Mammary epithelial cell (primary cell): ENCODE measurements at regions of chr3 and their contacts with region 1.

Region 1: GRCh38 chr3:185498503-185499396 is at the start of gene TMEM41A:
- DNase-seq: peak; percentile 88
- H3K4me3 ChIP-seq: peak within 1 kb of the TSS; percentile 73 to 98 (median 96)
- H3K27ac ChIP-seq: peak within 1 kb of the TSS; percentile 78
- H3K4me1 ChIP-seq: peaks cover 10% of the 10 kb centered on the region
- H3K27me3 ChIP-seq: no peaks in the 10 kb centered on the region
- CTCF ChIP-seq: no peak
- total RNA-seq, gene TMEM41A: 17.7 to 18.6 TPM

Region 2: DNA sequence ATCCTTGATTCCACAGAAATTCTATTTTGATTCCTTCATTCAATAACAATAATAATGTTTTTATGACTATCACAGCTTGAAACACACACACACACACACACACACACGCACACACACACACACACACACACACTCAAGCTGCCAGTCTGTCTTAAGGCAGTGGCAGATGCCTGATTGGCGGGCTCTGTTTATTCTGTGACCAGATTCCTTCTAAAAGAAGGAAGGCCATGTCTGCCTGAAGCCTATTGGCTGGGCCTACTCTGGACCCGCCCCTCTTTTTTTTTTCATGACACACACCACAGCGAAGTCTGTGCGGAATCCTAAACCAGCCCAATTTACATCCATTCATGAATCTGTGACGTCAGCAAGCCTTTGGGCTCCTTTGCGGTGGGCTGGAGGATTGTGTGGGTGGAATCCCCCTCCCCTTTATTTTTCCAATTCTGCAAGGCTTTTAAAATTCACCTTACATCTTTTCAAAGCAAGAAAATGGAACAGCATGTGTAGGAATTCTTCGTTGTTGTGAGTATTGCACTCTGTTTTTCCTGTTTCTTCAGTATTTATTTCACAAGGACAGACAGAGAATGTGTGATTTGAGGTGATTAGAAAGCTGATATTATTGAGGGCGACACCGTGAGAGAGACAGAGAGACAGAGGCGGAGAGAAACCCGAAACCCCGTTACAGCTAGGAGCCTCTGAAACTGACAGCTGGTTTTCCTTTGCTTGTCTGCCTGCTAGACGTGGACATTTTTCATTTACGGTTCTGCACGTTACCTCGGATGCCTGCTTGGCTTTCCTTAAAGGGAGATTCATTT is 135.7 kb before region 1 on chr3 and contains the start of gene MAP3K13:
- CTCF ChIA-PET with region 1: no interaction called
- dilution Hi-C with region 1: no loop called
- in situ Hi-C with region 1: no loop called
- intact Hi-C with region 1: loop called (anchors 5 kb)
- DNase-seq: peak; percentile 94
- H3K4me3 ChIP-seq: peak within 1 kb of the TSS; percentile 60 to 63 (median 61)
- H3K27ac ChIP-seq: peak within 1 kb of the TSS; percentile 79
- H3K4me1 ChIP-seq: peaks cover 18% of the 10 kb centered on the region
- H3K27me3 ChIP-seq: no peaks in the 10 kb centered on the region
- CTCF ChIP-seq: no peak
- total RNA-seq, gene MAP3K13: 21.5 to 28.8 TPM

Region 3: DNA sequence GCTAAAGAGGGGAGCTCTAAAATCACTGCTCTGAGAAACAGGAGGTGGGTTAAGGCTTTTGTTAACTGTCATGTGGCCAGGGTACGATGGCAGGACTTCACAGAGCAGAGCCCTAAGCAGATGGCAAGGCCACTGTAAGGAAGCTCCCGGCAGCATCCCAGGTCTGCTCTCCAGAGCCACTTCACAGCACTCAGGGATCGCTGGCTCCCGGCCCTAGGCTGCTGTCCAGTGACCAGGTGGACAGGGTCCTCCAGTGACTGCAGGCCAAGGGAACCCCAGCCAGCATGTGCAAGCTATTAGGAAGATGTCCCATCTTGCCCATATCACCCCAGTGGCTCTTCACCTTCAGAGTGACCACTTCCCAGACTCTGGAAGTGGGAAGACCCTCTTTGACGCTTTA is 10.3 kb before region 1 on chr3:
- CTCF ChIA-PET with region 1: no interaction called
- dilution Hi-C with region 1: no loop called
- in situ Hi-C with region 1: no loop called
- intact Hi-C with region 1: no loop called
- DNase-seq: no peak
- H3K4me3 ChIP-seq: no peak overlapping the region
- H3K27ac ChIP-seq: no peak overlapping the region
- H3K4me1 ChIP-seq: peaks cover 13% of the 10 kb centered on the region
- H3K27me3 ChIP-seq: no peaks in the 10 kb centered on the region
- CTCF ChIP-seq: no peak

Region 4: GRCh38 chr3:185552358-185552877 is 53.7 kb after region 1 on chr3 and contains the start of gene LIPH:
- CTCF ChIA-PET with region 1: no interaction called
- dilution Hi-C with region 1: no loop called
- in situ Hi-C with region 1: no loop called
- intact Hi-C with region 1: loop called (anchors 2 kb)
- DNase-seq: peak; percentile 66
- H3K4me3 ChIP-seq: no peak within 1 kb of the TSS
- H3K27ac ChIP-seq: no peak within 1 kb of the TSS
- H3K4me1 ChIP-seq: peaks cover 13% of the 10 kb centered on the region
- H3K27me3 ChIP-seq: no peaks in the 10 kb centered on the region
- CTCF ChIP-seq: no peak
- total RNA-seq, gene LIPH: 0.38 to 0.50 TPM

Region 5: GRCh38 chr3:185558395-185558794 is 59.6 kb after region 1 on chr3:
- CTCF ChIA-PET with region 1: interaction called, 3 read pairs
- dilution Hi-C with region 1: no loop called
- in situ Hi-C with region 1: no loop called
- intact Hi-C with region 1: loop called (anchors 1 kb)
- DNase-seq: peak; percentile 68
- H3K4me3 ChIP-seq: no peak overlapping the region
- H3K27ac ChIP-seq: peak overlapping the region; percentile 38
- H3K4me1 ChIP-seq: peaks cover 9% of the 10 kb centered on the region
- H3K27me3 ChIP-seq: no peaks in the 10 kb centered on the region
- CTCF ChIP-seq: no peak

Region 6: DNA sequence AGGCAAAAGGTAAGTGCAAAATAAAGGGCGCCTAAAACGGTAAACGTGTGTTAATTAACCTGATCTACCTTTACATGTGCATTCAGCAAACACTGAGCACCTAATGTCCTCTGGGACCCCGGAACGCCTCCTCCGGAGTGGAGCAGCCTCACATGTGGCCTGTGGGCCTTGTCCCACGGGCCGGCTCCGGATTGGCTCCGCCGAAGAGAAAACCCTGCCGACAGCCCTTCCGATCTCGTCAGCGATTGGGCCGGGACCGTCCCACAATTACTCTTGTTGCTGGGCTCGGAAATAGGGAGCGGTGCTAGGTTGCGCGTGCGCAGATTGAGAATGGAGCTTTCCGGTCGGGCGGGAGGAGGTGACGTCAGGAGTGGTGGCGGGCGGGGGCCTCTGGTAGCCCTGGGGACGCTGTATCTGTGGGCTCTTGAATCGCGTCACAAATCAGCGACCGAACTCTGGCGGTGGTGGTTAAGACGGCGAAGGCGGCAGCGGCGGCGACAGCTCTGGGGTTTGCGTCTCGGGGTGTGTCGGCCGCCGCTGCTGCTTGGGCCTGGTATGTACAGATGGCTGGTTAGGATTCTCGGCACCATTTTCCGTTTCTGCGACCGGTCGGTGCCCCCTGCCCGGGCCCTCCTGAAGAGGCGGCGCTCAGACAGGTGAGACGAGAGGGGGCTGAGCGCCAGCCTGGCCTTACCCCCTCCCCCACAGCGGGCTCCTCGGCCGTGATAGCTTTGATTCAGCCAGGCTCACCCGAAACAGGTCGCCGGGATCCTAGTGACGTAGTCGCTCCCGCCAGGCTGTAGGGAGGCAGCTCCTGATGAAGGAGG is 87.3 kb after region 1 on chr3 and contains the start of gene SENP2:
- CTCF ChIA-PET with region 1: no interaction called
- dilution Hi-C with region 1: no loop called
- in situ Hi-C with region 1: no loop called
- intact Hi-C with region 1: loop called (anchors 5 kb)
- DNase-seq: peak; percentile 99
- H3K4me3 ChIP-seq: peak within 1 kb of the TSS; percentile 60 to 93 (median 82)
- H3K27ac ChIP-seq: peak within 1 kb of the TSS; percentile 83
- H3K4me1 ChIP-seq: peaks cover 11% of the 10 kb centered on the region
- H3K27me3 ChIP-seq: no peaks in the 10 kb centered on the region
- CTCF ChIP-seq: no peak
- total RNA-seq, gene SENP2: 27.5 to 41.7 TPM